Posterior cingulate gyrus (tissue), 11 donors: ENCODE measurements at regions of chr1 and their contacts with region 1.

Region 1: DNA sequence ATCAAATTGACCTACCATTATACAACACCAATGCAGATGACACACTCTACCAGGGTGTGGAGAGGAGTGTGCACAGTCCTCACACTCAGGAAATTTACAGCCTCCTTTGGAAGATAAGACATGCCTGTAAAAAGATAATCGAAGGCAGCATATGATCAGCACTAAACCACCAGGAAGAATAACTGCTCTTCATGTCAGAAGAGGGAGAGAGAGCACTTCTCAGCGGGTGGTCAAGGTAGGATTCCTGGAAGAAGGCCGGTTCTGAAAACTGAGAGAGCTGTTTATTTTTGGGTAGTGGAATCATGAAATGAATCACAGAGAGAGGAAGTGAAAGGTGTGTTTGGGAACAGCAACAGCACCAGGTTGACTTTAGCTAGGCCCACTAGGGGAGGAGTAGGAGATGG is 14.0 kb upstream of the ZNF697 start:
- DNase-seq: no peak

Region 2: GRCh38 chr1:119549719-119550132 is 112.3 kb before region 1 on chr1:
- intact Hi-C with region 1: loop called (anchors 5 kb)
- DNase-seq: peak in 8 of 10 donors; percentile 45 to 92 (median 67)

Region 3: DNA sequence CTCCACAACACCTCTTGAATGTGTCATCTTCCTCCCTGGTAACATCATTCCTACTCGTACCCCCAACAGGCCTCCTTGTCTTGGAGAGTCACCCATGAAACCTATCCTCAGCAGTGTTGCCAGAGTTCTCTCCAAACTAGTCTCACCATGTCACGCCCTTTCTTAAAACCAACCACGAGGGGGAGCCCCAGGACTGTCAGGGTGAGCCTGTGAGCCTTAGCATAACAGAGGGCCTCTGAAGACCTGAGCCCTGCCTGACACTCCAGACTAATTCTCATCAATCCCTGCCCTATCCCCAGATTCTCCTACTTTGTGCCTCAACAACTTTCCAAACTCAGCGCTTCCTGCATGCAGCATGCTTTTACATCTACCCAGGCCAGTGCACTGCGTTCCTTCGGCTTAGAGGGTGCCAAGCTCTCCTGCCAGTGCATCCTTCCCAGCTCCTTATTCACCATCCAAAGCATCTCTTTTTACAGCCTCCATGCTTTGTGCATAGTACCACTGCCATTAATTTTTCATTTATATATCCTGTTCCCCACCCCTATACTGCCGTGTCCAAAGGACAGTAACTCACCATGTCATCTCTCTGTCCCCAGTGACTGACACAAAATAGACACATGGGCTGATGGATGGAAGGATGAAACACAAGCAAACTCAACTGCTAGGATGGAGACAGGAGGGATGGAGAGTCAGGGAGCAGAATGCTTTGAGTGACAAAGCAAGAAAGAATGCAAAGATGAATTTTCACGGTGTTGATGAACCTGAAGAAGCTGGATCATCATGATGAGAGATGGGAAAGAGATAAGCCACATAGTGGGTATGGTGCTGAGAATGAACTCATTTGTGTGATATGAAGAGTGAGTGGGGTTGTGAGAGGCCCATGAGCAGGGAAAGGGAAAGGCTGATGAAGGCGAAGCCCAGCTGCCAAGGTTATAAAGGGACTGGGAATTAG is 48.0 kb before region 1 on chr1:
- intact Hi-C with region 1: loop called (anchors 1 kb)
- DNase-seq: peak; percentile 57 to 97 (median 87)